ENCODE measurements at regions of chr6 and their contacts with region 1.

Region 1: GRCh38 chr6:97081010-97081573 is 156.6 kb downstream of the KLHL32 start:
- DNase-seq: no peak

Region 2: GRCh38 chr6:96099069-96099468 is 982.0 kb before region 1 on chr6:
- intact Hi-C with region 1: loop called in 1 of 2 experiments (anchors 5 kb)
- DNase-seq: no peak

Region 3: GRCh38 chr6:96213784-96214183 is 867.3 kb before region 1 on chr6:
- intact Hi-C with region 1: loop called in 1 of 2 experiments (anchors 5 kb)
- DNase-seq: no peak

Region 4: GRCh38 chr6:97508646-97509045 is 427.6 kb after region 1 on chr6:
- intact Hi-C with region 1: no loop called
- DNase-seq: no peak